ENCODE measurements at regions of chr6 and their contacts with region 1.

Region 1: DNA sequence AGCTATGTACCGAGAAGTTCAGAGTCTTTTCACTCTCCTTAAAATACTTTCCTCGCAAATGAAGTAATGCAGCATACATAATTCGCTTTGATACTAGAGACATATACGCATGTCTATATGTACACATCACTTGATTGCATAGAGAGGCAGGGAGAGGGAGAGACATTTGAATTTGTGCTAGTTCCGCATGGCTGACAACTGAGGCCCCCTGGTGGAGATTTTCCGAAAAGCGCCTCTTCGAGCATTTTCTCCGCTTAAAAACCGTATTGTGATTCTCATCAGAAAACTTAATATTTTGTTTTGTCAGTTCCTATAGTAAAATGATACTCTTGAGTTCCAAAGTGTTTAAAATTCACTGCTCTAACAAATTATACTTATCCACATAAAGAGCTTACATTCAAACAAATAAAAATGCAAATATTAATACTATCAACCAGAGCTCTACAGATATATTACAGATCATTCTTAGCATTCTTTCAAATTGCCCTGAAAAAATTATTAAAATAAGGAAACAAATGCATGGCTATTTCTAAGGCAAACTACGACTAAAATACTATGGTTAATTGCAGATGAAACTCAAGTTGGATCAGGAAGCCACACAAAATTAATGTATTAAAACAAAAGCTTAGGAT is 637 bp downstream of the MYLK4 start:
- DNase-seq: peak; percentile 80
- H3K4me3 Mint-ChIP-seq: no peak overlapping the region
- H3K27ac Mint-ChIP-seq: no peak overlapping the region
- H3K4me1 Mint-ChIP-seq: peaks cover 2% of the 10 kb centered on the region
- H3K27me3 Mint-ChIP-seq: peaks cover 12% of the 10 kb centered on the region

Region 2: GRCh38 chr6:2693231-2693630 is 56.9 kb before region 1 on chr6:
- CTCF ChIA-PET with region 1: interaction called, 3 read pairs
- POLR2A ChIA-PET with region 1: no interaction called
- intact Hi-C with region 1: loop called (anchors 5 kb)
- DNase-seq: no peak
- H3K4me3 Mint-ChIP-seq: no peak overlapping the region
- H3K27ac Mint-ChIP-seq: no peak overlapping the region
- H3K4me1 Mint-ChIP-seq: no peaks in the 10 kb centered on the region
- H3K27me3 Mint-ChIP-seq: peaks cover 1% of the 10 kb centered on the region

Region 3: GRCh38 chr6:2733324-2733723 is 16.8 kb before region 1 on chr6:
- CTCF ChIA-PET with region 1: interaction called, 105 read pairs
- POLR2A ChIA-PET with region 1: interaction called, 3 read pairs
- intact Hi-C with region 1: loop called (anchors 1 kb)
- DNase-seq: peak; percentile 74
- H3K4me3 Mint-ChIP-seq: no peak overlapping the region
- H3K27ac Mint-ChIP-seq: no peak overlapping the region
- H3K4me1 Mint-ChIP-seq: peaks cover 11% of the 10 kb centered on the region
- H3K27me3 Mint-ChIP-seq: peaks cover 2% of the 10 kb centered on the region

Region 4: DNA sequence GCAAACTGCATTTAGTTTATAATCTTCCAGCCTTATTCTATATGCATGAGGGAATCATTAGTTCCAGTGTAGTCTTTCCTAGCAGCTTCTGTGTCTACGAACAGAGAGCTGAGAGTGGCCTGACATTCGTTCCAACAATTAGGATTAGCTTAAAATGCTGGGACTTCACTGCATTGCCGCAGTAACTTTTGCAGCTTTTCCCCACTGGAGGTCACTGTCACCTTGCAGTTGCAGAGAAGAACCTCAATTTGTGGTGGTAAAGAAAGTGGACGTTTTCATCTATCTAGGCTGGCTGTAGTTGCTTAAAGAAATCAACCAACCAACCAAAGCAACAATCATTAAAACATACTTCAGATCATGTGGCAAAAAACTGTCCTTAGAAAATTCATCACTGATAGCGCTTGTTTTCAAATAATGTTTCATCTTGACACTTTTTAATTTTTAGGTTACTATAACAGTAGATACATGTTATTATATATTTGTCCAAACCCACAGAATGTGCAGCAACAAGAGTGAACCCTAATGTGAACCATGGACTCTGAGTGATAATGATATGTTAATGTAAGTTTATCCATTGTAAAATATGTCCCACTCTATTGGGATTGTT is 11.6 kb before region 1 on chr6:
- CTCF ChIA-PET with region 1: interaction called, 105 read pairs
- POLR2A ChIA-PET with region 1: interaction called, 3 read pairs
- intact Hi-C with region 1: loop called (anchors 1 kb)
- DNase-seq: peak; percentile 66
- H3K4me3 Mint-ChIP-seq: no peak overlapping the region
- H3K27ac Mint-ChIP-seq: no peak overlapping the region
- H3K4me1 Mint-ChIP-seq: peaks cover 9% of the 10 kb centered on the region
- H3K27me3 Mint-ChIP-seq: peaks cover 3% of the 10 kb centered on the region

Measured in activated CD4-positive, alpha-beta memory T cell treated with anti-CD3 and anti-CD28 coated beads for 36 hours (primary cell).